Lower leg skin (tissue), 4 donors: ENCODE measurements at regions of chr18 and their contacts with region 1.

Region 1: DNA sequence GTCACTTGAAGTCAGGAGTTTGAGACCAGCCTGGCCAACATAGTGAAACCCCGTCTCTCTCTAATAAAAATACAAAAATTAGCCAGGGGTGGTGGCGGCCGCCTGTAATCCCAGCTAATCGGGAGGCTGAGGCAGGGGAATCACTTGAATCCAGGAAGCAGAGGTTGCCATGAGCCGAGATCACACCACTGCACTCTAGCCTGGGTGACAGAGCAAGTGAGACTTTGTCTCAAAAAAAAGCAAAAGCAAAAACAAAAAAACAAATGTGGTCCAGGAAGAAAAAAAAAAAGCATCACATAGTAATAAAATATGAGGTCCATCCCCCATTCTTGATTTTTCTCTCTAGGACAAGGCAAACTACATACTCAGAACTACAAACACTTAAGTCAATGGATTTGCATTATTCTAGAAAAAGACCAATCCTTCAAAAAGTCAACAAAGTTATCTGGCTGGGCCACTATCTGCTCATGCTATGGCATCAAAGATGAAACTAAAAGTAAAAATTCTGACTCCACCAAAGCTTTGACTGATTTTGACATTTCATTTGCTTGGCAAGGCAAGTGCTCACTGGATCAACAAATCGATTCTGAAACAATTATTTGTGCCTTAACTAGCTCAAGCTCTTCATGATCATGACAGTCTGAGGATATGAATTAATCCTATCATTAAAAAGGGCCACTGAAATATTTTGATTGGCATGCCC is 28.4 kb downstream of the MEX3C start:
- DNase-seq: no peak
- H3K4me3 ChIP-seq: no peak overlapping the region
- CTCF ChIP-seq: no peak
- POLR2A ChIP-seq: no peak

Region 2: DNA sequence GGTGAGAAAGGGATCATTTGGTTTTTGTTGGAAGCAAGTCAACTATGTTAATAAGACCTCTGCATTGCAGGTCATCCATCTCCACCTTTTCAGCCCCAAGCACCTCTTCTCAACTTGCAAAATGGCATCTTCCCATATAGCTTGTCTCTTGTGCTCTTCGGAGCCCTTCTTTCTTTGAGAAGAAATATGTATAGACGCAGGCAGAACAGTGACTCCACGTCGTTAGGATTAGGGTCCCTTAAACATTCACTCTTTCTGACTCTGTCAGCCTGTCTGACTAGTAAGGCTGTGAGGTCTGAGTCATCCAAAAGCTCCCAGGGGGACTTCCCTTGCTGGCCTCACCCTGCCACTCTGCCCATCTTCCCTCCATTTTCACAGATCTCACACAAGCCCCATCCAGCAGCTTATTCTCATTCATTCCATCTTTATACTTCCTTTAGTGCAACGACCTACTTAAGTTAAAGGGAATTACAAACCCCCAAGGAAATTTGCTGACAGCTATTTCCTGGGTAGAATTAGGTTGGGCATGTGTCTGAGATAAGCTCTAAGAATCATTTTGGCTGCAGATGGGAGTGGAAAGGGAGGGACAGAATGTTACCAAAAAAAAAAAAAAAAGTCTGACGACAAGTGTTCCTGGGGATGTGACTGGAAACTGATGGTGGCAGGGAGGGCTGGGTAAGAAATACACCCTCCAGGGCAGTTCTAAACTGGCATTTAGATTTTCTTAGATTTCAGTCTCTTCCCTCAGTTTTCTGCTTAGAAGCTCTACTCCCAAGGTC is 66.1 kb after region 1 on chr18:
- intact Hi-C with region 1: loop called (anchors 10 kb)
- DNase-seq: no peak
- H3K4me3 ChIP-seq: no peak overlapping the region
- CTCF ChIP-seq: no peak
- POLR2A ChIP-seq: no peak